Dendritic cell treated with granulocyte-macrophage colony-stimulating factor and Interleukin-4, amounts not matched to agents 40 ng/mL and 50 ng/mL, for 4 days (primary cell): ENCODE measurements at regions of chr1 and their contacts with region 1.

Region 1: GRCh38 chr1:19439464-19440171 is 45.7 kb downstream of the CAPZB start:
- H3K4me3 Mint-ChIP-seq: no peak overlapping the region
- H3K27ac Mint-ChIP-seq: no peak overlapping the region
- H3K4me1 Mint-ChIP-seq: peaks cover 74% of the 10 kb centered on the region
- H3K27me3 Mint-ChIP-seq: no peaks in the 10 kb centered on the region

Region 2: GRCh38 chr1:19240673-19241538 is 198.7 kb before region 1 on chr1:
- intact Hi-C with region 1: no loop called
- H3K4me3 Mint-ChIP-seq: no peak overlapping the region
- H3K27ac Mint-ChIP-seq: peak overlapping the region; percentile 41
- H3K4me1 Mint-ChIP-seq: peaks cover 5% of the 10 kb centered on the region
- H3K27me3 Mint-ChIP-seq: no peaks in the 10 kb centered on the region

Region 3: GRCh38 chr1:19596714-19597495 is 157.3 kb after region 1 on chr1:
- intact Hi-C with region 1: loop called (anchors 5 kb)
- H3K4me3 Mint-ChIP-seq: peak overlapping the region; percentile 89
- H3K27ac Mint-ChIP-seq: peak overlapping the region; percentile 94
- H3K4me1 Mint-ChIP-seq: peaks cover 41% of the 10 kb centered on the region
- H3K27me3 Mint-ChIP-seq: no peaks in the 10 kb centered on the region